Mammary epithelial cell (primary cell): ENCODE measurements at regions of chr3 and their contacts with region 1.

Region 1: GRCh38 chr3:12810013-12810780 is 13.7 kb downstream of the CAND2 start:
- DNase-seq: peak; percentile 77
- H3K4me3 ChIP-seq: peak overlapping the region; percentile 49 to 70 (median 58)
- H3K27ac ChIP-seq: no peak overlapping the region
- H3K4me1 ChIP-seq: peaks cover 6% of the 10 kb centered on the region
- H3K27me3 ChIP-seq: no peaks in the 10 kb centered on the region
- CTCF ChIP-seq: peak; percentile 40 to 86

Region 2: DNA sequence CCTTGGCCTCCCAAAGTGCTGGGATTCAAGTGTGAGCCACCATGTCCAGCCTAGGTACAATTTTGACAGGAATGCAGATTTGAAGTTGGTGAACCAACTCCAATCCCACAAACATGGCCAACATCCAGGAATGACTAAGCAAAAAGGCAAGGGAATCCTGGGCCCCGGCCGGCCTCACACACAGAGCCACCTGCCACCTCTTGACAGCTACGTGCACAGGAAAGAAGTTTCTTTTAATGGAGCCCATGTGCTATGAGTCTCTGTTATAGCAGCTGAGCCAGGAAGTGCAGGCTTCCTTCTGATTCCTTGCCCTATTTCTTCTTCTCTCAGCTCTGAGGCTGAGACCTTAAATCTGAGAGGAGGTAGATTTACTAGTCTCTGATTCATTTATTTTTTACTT is 60.0 kb before region 1 on chr3:
- CTCF ChIA-PET with region 1: no interaction called
- dilution Hi-C with region 1: no loop called
- in situ Hi-C with region 1: no loop called
- intact Hi-C with region 1: loop called (anchors 2 kb)
- DNase-seq: peak; percentile 76
- H3K4me3 ChIP-seq: no peak overlapping the region
- H3K27ac ChIP-seq: peak overlapping the region; percentile 61
- H3K4me1 ChIP-seq: peaks cover 44% of the 10 kb centered on the region
- H3K27me3 ChIP-seq: no peaks in the 10 kb centered on the region
- CTCF ChIP-seq: no peak

Region 3: GRCh38 chr3:12758025-12758830 is 52.0 kb before region 1 on chr3:
- CTCF ChIA-PET with region 1: interaction called, 3 read pairs
- dilution Hi-C with region 1: no loop called
- in situ Hi-C with region 1: no loop called
- intact Hi-C with region 1: loop called (anchors 1 kb)
- DNase-seq: peak; percentile 46
- H3K4me3 ChIP-seq: peak overlapping the region; percentile 58 to 69 (median 65)
- H3K27ac ChIP-seq: peak overlapping the region; percentile 68
- H3K4me1 ChIP-seq: peaks cover 68% of the 10 kb centered on the region
- H3K27me3 ChIP-seq: no peaks in the 10 kb centered on the region
- CTCF ChIP-seq: no peak

Region 4: GRCh38 chr3:13308380-13308801 is 498.2 kb after region 1 on chr3:
- CTCF ChIA-PET with region 1: no interaction called
- dilution Hi-C with region 1: no loop called
- in situ Hi-C with region 1: no loop called
- intact Hi-C with region 1: no loop called
- DNase-seq: peak; percentile 18
- H3K4me3 ChIP-seq: no peak overlapping the region
- H3K27ac ChIP-seq: no peak overlapping the region
- H3K4me1 ChIP-seq: no peaks in the 10 kb centered on the region
- H3K27me3 ChIP-seq: no peaks in the 10 kb centered on the region
- CTCF ChIP-seq: peak; percentile 26 to 51